ENCODE measurements at regions of chr20 and their contacts with region 1.

Region 1: GRCh38 chr20:5080384-5080877 is 39.3 kb downstream of the PCNA start:
- DNase-seq: peak; percentile 28 to 43
- ATAC-seq: peak in 7 of 8 donors; percentile 72 to 85 (median 76)
- H3K4me3 ChIP-seq: no peak overlapping the region
- H3K27ac ChIP-seq: peak overlapping the region in 4 of 10 donors; percentile 21 to 91 (median 46)
- H3K4me1 ChIP-seq: peaks cover 0 to 61% (median 0%) of the 10 kb centered on the region in 9 donors
- H3K27me3 ChIP-seq: no peaks in the 10 kb centered on the region
- CTCF ChIP-seq: no peak

Region 2: DNA sequence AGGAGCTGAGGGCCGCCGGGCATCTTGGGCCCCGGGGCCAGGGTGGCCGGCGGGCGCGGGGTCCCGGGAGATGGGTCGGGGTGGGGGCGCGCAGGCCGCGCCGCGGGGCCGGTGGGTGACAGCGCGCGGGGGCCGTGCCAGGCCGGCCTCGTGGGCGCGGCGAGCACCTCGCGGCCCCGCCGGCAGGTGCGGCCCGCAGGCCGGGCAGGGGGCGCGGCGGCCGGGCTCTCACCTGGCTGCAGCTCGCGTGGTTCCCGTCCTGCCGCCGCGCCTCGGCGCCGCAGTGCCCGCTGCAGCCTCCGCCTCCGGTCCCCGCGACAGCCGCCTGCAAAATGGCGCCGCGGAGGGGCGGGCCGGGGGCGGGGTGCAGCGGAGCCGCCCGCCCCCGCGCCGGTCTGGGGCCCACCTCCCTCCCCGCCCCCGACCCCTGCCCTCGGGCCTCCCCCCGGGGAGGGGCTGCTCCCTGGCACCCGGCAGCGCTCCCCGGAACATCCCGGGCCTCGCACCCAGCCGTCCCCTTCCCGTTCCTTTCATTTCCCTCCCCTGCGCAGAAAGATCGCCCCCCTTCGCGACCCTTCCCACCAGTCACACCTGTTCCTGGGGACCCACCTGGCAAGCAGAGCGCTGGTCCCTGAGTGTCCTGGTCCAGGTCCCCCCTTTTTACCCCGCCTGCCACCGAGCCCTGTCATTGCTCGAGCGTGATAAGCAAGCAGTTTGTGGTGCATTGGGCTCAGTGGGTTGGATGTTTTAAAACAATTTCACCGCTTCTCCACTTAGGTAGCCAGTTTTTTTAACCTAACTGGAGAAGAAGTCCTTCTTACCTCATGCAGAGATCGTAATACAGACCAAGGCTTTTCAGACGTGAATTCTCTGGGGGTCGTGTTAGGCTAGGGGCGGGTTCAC is 79.0 kb before region 1 on chr20 and contains the start of gene SLC23A2:
- intact Hi-C with region 1: loop called in 1 of 10 experiments (anchors 10 kb)
- DNase-seq: peak; percentile 35 to 48
- ATAC-seq: peak; percentile 54 to 89 (median 82)
- H3K4me3 ChIP-seq: peak within 1 kb of the TSS; percentile 65 to 96 (median 88)
- H3K27ac ChIP-seq: peak within 1 kb of the TSS in 5 of 10 donors; percentile 10 to 71 (median 41)
- H3K4me1 ChIP-seq: peaks cover 5 to 33% (median 12%) of the 10 kb centered on the region in 9 donors
- H3K27me3 ChIP-seq: no peaks in the 10 kb centered on the region
- CTCF ChIP-seq: no peak
- total RNA-seq, gene SLC23A2: 6.3 to 12.3 (median 7.5) TPM

Region 3: GRCh38 chr20:5126512-5127203 is 46.2 kb after region 1 on chr20 and contains the start of gene CDS2:
- intact Hi-C with region 1: no loop called
- DNase-seq: peak; percentile 100
- ATAC-seq: peak; percentile 97 to 99 (median 97)
- H3K4me3 ChIP-seq: peak within 1 kb of the TSS; percentile 83 to 98 (median 94)
- H3K27ac ChIP-seq: peak within 1 kb of the TSS; percentile 89 to 99 (median 98)
- H3K4me1 ChIP-seq: peaks cover 7 to 60% (median 48%) of the 10 kb centered on the region in 9 donors
- H3K27me3 ChIP-seq: no peaks in the 10 kb centered on the region
- CTCF ChIP-seq: peak; percentile 54 to 90 (median 71)
- total RNA-seq, gene CDS2: 67.5 to 100 (median 85.7) TPM

Measured in heart right ventricle (tissue), 16 donors.